Left lung (tissue), 14 donors: ENCODE measurements at regions of chr7 and their contacts with region 1.

Region 1: DNA sequence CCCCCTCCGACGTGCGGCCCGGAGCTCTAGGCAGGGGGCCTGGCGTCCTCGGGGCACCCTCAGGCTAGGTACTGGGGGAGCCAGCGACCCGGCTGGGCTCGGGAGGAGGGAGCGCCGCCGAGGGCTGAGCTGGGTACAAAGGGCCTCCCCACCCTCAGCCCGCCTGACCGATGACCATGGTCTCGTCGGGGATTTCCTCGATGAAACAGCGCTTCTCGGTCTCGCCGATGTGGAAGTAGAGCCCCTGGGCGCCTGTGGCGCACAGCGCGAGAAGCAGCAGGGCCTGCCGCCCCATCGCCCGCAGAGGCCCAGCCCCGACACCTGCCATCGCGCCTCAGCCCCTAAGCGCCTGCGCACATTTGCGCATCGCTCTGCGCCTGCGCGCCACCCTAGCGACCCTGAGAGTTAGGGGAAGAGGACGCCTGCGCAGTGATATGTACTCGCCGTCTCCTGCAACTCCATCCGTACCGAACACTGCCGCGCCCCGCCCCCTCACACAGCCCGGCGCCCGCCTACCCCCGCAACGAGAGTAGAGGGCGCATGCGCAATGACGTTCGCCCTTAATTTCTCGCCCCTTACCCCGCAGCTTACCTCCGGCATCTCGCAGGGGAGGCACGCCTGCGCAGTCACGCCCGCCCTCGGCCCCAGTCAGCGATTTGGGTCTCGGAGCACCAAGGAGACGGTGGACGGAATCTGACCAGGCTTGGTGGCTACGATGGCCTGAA is at the start of gene TMED4:
- DNase-seq: peak; percentile 99 to 100 (median 100)
- ATAC-seq: peak; percentile 97
- H3K4me3 ChIP-seq: peak within 1 kb of the TSS; percentile 92 to 99
- H3K27ac ChIP-seq: peak within 1 kb of the TSS; percentile 99
- H3K4me1 ChIP-seq: peaks cover 7 to 29% of the 10 kb centered on the region in 2 donors
- H3K27me3 ChIP-seq: no peaks in the 10 kb centered on the region
- CTCF ChIP-seq: no peak
- polyA plus RNA-seq, gene TMED4: 88.7 to 102 (median 95.5) TPM

Region 2: GRCh38 chr7:44693721-44694285 is 111.8 kb after region 1 on chr7:
- intact Hi-C with region 1: no loop called
- DNase-seq: no peak
- ATAC-seq: peak; percentile 44
- H3K4me3 ChIP-seq: no peak overlapping the region
- H3K27ac ChIP-seq: no peak overlapping the region
- H3K4me1 ChIP-seq: no peaks in the 10 kb centered on the region
- H3K27me3 ChIP-seq: no peaks in the 10 kb centered on the region
- CTCF ChIP-seq: no peak

Region 3: DNA sequence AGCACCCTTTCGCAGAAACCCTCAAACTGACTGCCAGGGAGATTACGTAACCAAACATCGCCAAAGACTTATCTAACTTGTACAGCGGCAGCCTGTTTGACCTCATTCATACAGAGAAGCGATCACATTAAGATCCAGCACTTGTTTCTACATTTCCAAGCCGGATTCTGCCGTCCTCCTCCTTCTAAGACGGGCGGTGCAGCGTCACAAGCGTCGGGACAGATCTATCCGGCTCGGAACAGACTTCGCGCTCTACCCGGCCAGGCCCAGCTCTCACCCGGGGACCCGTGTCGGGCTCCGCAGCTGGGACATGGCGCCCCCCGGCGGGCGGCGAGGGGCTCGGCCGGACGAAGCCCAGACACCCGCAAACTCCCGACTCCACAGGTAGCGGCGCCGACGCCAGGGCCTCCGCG is 265.5 kb after region 1 on chr7:
- intact Hi-C with region 1: loop called in 1 of 2 experiments (anchors 10 kb)
- DNase-seq: peak; percentile 90 to 95 (median 91)
- ATAC-seq: peak; percentile 80
- H3K4me3 ChIP-seq: peak overlapping the region; percentile 46 to 69
- H3K27ac ChIP-seq: peak overlapping the region; percentile 98 to 99
- H3K4me1 ChIP-seq: peaks cover 5 to 32% of the 10 kb centered on the region in 2 donors
- H3K27me3 ChIP-seq: no peaks in the 10 kb centered on the region
- CTCF ChIP-seq: peak; percentile 79 to 91

Region 4: GRCh38 chr7:44921607-44922359 is 339.7 kb after region 1 on chr7:
- intact Hi-C with region 1: loop called in 1 of 2 experiments (anchors 10 kb)
- DNase-seq: peak; percentile 49 to 100 (median 84)
- ATAC-seq: peak; percentile 100
- H3K4me3 ChIP-seq: no peak overlapping the region
- H3K27ac ChIP-seq: no peak overlapping the region
- H3K4me1 ChIP-seq: no peaks in the 10 kb centered on the region
- H3K27me3 ChIP-seq: no peaks in the 10 kb centered on the region
- CTCF ChIP-seq: peak; percentile 92 to 94

Region 5: GRCh38 chr7:45068236-45069023 is 486.4 kb after region 1 on chr7:
- intact Hi-C with region 1: no loop called
- DNase-seq: peak in 1 of 4 donors; percentile 19
- ATAC-seq: no peak
- H3K4me3 ChIP-seq: no peak overlapping the region
- H3K27ac ChIP-seq: no peak overlapping the region
- H3K4me1 ChIP-seq: peaks cover 0 to 16% of the 10 kb centered on the region in 2 donors
- H3K27me3 ChIP-seq: no peaks in the 10 kb centered on the region
- CTCF ChIP-seq: no peak